ENCODE measurements at regions of chr2 and their contacts with region 1.

Region 1: DNA sequence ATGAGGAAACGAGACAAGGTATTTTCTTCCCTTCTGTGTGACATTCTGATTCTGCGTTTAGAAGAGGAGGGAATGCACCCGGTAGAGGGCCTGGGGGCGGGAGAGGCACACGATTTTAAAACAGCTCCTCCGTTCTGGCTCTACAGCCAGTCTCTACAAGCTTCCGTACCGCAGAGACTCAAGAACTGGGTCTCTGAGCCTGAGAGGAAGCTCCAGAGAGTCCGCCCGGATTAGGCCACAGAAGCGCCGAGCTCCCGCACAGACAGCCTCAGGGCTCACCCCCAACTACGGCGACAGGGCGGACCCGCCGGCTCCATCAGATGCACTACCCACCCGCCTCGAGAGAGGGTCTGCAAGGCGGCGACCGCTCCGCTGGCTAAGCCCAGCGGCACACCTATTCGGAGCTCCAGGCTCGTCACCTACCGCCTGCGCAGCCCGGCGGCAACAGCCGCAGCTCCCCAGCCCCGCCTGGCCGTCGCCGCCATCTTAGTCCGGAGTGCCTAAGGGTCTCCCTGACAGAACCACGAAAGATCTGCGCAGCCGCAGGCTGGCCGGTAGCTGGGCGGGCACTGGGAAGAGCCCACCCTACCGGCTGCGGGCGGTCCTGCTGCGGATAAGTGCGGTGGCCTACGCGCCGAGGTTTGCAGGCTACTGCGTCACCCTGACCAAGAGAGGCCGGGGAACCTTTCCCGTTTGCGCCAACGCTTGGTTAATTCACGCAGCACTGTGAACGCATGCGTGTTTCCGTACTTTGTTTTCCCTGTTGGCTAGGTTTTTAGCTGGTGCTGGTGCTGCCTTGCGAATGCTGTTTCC is at the start of gene NFU1:
- DNase-seq: peak; percentile 94 to 95
- ATAC-seq: peak; percentile 98 to 99 (median 99)
- H3K4me3 ChIP-seq: peak within 1 kb of the TSS; percentile 69 to 95 (median 88)
- H3K27ac ChIP-seq: peak within 1 kb of the TSS; percentile 92 to 98 (median 95)
- H3K4me1 ChIP-seq: peaks cover 0 to 40% (median 25%) of the 10 kb centered on the region in 9 donors
- H3K27me3 ChIP-seq: no peaks in the 10 kb centered on the region
- CTCF ChIP-seq: peak; percentile 64 to 82 (median 75)
- total RNA-seq, gene NFU1: 97.9 to 148 (median 125) TPM

Region 2: DNA sequence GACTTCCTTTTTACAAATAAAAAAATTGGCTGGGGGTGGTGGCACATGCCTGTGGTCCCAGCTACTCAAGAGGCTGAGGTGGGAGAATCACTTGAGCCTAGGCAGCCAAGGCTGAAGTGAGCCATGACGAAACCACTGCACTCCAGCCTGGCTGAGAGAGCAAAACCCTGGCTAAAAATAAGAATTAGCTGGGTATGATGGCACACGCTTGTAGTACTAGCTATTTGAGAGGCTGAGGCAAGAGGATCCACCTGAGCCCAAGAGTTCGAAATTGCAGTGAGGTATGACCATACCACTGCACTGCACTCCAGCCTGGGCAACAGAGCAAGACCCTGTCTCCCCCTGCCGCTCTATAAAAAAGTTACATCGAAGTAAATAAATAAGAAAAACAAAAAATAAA is 83.8 kb before region 1 on chr2:
- intact Hi-C with region 1: no loop called
- DNase-seq: no peak
- ATAC-seq: peak in 2 of 8 donors; percentile 69 to 78
- H3K4me3 ChIP-seq: no peak overlapping the region
- H3K27ac ChIP-seq: no peak overlapping the region
- H3K4me1 ChIP-seq: no peaks in the 10 kb centered on the region
- H3K27me3 ChIP-seq: no peaks in the 10 kb centered on the region
- CTCF ChIP-seq: no peak

Region 3: DNA sequence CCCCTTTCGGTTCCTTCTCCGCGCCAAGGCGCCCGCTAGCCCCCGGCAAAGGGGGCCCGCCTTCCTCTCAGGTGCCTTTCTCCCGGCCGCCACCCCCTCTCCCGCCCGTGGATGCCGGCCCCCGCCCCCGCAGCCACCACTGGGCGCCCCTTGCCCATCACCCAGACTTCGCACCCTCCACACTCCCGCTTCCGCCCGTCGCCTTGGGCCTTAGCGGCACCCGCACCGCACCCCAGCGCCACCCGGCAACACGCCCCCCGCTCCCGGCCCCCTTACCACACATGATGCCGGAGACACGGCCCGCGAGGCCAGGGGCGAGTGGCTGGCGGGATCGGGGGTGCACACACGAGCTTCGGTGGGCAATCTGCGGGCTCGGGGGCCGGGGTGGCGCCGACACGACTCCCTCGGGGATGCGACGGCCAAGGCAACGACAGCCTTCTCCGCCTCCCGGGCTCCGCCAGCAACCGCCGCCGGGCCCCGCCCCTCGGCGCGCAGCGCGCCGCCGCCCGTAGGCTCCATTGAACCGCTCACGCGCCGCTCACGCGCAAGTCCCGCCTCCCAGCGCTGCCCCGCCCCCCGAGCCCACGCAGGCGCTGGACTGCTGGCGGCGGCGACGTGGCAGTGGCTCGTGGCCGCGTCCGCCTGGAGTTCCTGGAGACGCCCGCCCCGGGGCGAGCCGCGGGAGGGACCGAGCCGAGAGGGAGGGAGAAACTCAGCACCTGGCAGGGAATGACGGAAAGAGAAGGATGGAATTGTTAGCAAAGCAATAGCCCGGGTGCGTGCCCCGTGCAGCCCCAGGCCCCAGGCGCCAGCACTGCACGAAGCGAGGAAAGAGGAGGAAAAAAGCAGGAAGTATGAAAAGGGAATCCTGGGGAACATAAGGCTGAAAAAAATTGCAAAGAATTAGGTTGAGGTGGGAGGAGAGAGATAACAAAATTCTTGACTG is 50.1 kb before region 1 on chr2 and contains the start of gene GFPT1:
- intact Hi-C with region 1: loop called in 2 of 10 experiments (anchors 5 kb)
- DNase-seq: peak; percentile 93 to 97
- ATAC-seq: peak; percentile 98 to 99 (median 99)
- H3K4me3 ChIP-seq: peak within 1 kb of the TSS; percentile 84 to 96 (median 88)
- H3K27ac ChIP-seq: peak within 1 kb of the TSS; percentile 54 to 92 (median 86)
- H3K4me1 ChIP-seq: peaks cover 0 to 62% (median 31%) of the 10 kb centered on the region in 9 donors
- H3K27me3 ChIP-seq: no peaks in the 10 kb centered on the region
- CTCF ChIP-seq: peak in 2 of 9 donors; percentile 1 to 9
- total RNA-seq, gene GFPT1: 30.8 to 90.3 (median 65.7) TPM

Measured in heart right ventricle (tissue), 16 donors.